ENCODE measurements at regions of chr10 and their contacts with region 1.

Region 1: GRCh38 chr10:21764466-21765189 is 230.6 kb downstream of the MLLT10 start:
- DNase-seq: no peak
- H3K4me3 ChIP-seq: no peak overlapping the region
- H3K27ac ChIP-seq: no peak overlapping the region
- H3K4me1 ChIP-seq: no peaks in the 10 kb centered on the region
- H3K27me3 ChIP-seq: no peaks in the 10 kb centered on the region
- CTCF ChIP-seq: no peak
- POLR2A ChIP-seq: no peak

Region 2: GRCh38 chr10:21776883-21777282 is 12.3 kb after region 1 on chr10:
- CTCF ChIA-PET with region 1: no interaction called
- POLR2A ChIA-PET with region 1: no interaction called
- dilution Hi-C with region 1: no loop called
- intact Hi-C with region 1: loop called (anchors 1 kb)
- DNase-seq: no peak
- H3K4me3 ChIP-seq: no peak overlapping the region
- H3K27ac ChIP-seq: no peak overlapping the region
- H3K4me1 ChIP-seq: no peaks in the 10 kb centered on the region
- H3K27me3 ChIP-seq: no peaks in the 10 kb centered on the region
- CTCF ChIP-seq: no peak
- POLR2A ChIP-seq: no peak

Region 3: DNA sequence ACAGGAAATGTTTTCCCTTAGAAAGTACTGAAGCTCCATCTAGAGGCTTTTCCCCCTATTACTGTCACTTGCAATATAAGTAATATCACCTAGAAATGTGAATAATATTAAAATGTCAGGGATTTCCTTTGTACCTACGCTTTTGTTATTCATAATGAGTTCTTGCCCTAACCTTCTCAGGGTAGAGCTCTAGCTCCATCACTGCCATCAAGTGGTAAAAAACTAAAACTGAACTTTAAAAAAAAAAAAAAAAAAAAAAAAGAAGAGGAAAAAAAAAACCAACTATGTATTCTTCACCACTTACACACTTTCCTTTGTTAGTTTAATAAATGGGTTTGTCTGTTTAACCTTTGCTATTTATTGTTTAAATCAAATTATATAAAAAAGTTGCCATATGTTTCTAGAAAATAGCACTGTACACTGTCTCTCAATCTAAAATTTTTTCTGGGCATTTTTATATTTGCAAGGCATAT is 189.0 kb after region 1 on chr10:
- CTCF ChIA-PET with region 1: no interaction called
- POLR2A ChIA-PET with region 1: no interaction called
- dilution Hi-C with region 1: no loop called
- intact Hi-C with region 1: loop called (anchors 10 kb)
- DNase-seq: peak; percentile 70
- H3K4me3 ChIP-seq: no peak overlapping the region
- H3K27ac ChIP-seq: no peak overlapping the region
- H3K4me1 ChIP-seq: no peaks in the 10 kb centered on the region
- H3K27me3 ChIP-seq: no peaks in the 10 kb centered on the region
- CTCF ChIP-seq: peak in 1 of 2 donors; percentile 9
- POLR2A ChIP-seq: no peak